Activated CD4-positive, alpha-beta T cell treated with anti-CD3 and anti-CD28 coated beads for 36 hours (primary cell): ENCODE measurements at regions of chr19 and their contacts with region 1.

Region 1: DNA sequence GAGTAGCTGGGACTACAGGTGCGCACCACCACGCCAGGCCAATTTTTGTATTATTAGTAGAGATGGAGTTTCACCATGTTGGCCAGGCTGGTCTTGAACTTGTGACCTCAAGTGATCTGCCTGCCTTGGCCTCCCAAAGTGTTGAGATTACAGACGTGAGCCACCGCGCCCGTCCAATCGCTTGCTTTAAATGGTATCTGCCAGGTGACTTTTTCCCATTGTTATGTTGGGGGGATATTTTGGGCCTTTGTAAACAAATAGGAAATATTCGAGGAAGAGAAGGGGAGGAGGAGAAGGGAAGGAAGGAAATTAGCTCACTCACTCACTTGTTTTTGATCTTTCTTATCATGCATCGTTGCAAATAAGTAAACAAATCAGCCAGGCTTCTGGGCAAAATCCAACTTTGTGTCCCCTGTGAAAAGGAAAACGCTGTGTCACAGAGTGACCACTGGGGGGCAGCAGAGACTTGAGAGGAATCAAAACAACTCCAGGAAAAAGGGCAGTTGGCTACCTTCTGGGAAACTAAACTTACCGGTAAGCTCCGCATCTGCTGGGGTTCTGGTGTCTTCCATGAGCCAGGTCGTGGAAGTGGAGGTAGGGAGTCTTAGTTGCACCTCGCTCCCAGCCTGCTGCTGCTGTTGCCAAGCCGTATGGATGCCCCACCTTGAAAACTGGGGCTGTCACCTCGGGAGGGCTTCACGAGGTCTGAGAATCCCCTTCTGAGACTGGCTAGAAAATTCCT is 9.3 kb upstream of the RANBP3 start:
- DNase-seq: peak; percentile 84
- ATAC-seq: peak; percentile 57
- H3K4me3 Mint-ChIP-seq: peak overlapping the region; percentile 46
- H3K27ac Mint-ChIP-seq: no peak overlapping the region
- H3K4me1 Mint-ChIP-seq: peaks cover 29% of the 10 kb centered on the region
- H3K27me3 Mint-ChIP-seq: no peaks in the 10 kb centered on the region

Region 2: DNA sequence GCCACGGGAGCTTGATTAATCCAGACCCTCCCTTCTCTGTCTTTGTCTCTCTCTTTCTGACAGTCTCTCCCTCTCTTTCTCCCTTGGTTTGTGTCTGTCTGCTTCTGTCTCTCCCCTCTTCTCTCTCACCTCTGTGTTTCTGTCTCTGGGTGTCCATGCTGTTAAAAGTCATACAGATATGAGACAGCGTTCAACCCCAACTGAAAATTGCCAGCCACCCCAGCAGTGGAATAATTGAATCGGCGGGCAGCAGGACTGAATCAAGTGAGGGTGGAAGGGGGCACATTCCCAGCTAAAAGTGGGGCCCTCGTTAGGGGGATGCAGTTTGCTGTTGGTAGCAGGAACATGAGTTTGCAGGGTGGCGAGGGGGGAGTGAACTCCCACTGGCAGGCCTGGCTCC is 463.2 kb before region 1 on chr19:
- CTCF ChIA-PET with region 1: no interaction called
- POLR2A ChIA-PET with region 1: no interaction called
- intact Hi-C with region 1: no loop called
- DNase-seq: no peak
- ATAC-seq: no peak
- H3K4me3 Mint-ChIP-seq: no peak overlapping the region
- H3K27ac Mint-ChIP-seq: no peak overlapping the region
- H3K4me1 Mint-ChIP-seq: no peaks in the 10 kb centered on the region
- H3K27me3 Mint-ChIP-seq: peaks cover 34% of the 10 kb centered on the region

Region 3: DNA sequence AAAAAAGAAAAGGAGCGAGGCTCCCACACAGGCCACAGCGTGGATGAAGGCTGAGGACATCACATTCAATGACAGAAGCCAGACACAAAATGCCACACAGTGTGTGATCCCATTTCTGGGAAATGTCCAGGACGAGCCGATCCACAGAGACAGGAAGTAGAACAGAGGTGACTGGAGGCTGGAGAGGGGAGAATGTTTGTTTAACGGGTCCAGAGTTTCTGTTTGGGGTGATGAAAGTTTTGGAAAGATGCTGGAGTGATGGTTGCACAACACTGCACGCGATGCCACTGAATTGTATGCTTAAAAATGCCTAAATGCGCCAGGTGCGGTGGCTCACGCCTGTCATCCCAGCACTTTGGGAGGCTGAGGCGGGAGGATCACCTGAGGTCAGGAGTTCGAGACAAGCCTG is 116.3 kb before region 1 on chr19:
- CTCF ChIA-PET with region 1: no interaction called
- POLR2A ChIA-PET with region 1: no interaction called
- intact Hi-C with region 1: no loop called
- DNase-seq: no peak
- ATAC-seq: no peak
- H3K4me3 Mint-ChIP-seq: no peak overlapping the region
- H3K27ac Mint-ChIP-seq: no peak overlapping the region
- H3K4me1 Mint-ChIP-seq: no peaks in the 10 kb centered on the region
- H3K27me3 Mint-ChIP-seq: no peaks in the 10 kb centered on the region

Region 4: GRCh38 chr19:5967994-5968430 is 19.2 kb before region 1 on chr19:
- CTCF ChIA-PET with region 1: interaction called, 39 read pairs
- POLR2A ChIA-PET with region 1: no interaction called
- intact Hi-C with region 1: no loop called
- DNase-seq: peak; percentile 80
- ATAC-seq: peak; percentile 89
- H3K4me3 Mint-ChIP-seq: no peak overlapping the region
- H3K27ac Mint-ChIP-seq: peak overlapping the region; percentile 89
- H3K4me1 Mint-ChIP-seq: peaks cover 87% of the 10 kb centered on the region
- H3K27me3 Mint-ChIP-seq: no peaks in the 10 kb centered on the region

Region 5: GRCh38 chr19:6125571-6125989 is 138.3 kb after region 1 on chr19:
- CTCF ChIA-PET with region 1: interaction called, 3 read pairs
- POLR2A ChIA-PET with region 1: no interaction called
- intact Hi-C with region 1: loop called (anchors 2 to 5 kb)
- DNase-seq: peak; percentile 75
- ATAC-seq: peak; percentile 84
- H3K4me3 Mint-ChIP-seq: no peak overlapping the region
- H3K27ac Mint-ChIP-seq: no peak overlapping the region
- H3K4me1 Mint-ChIP-seq: no peaks in the 10 kb centered on the region
- H3K27me3 Mint-ChIP-seq: peaks cover 3% of the 10 kb centered on the region